GM12878 (cell line): ENCODE measurements at regions of chr3 and their contacts with region 1.

Region 1: DNA sequence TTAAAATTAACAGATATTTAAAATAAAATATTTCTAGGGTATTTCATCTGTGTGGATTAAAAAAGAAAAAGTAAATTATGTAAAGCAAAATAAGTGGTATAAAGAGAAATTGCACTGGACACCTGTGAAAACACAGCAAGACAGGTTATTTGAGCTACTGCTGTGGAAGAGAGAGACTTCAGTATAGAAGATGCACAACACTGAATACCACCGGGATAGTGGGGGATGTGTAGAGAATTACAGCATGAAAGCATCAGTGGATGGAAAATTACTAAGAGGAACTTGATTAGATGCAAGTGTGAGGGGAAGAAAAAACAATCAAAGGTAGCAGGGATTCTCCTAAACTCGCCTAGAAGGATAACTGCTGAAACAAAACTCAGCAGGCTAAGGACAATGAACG is 1242.5 kb upstream of the GBE1 start:
- DNase-seq: no peak
- ATAC-seq: no peak
- H3K4me3 ChIP-seq: no peak overlapping the region
- H3K27ac ChIP-seq: no peak overlapping the region
- H3K4me1 ChIP-seq: no peaks in the 10 kb centered on the region
- H3K27me3 ChIP-seq: no peaks in the 10 kb centered on the region
- CTCF ChIP-seq: no peak
- EP300 ChIP-seq: no peak
- POLR2A ChIP-seq: no peak
- RAD21 ChIP-seq: no peak

Region 2: DNA sequence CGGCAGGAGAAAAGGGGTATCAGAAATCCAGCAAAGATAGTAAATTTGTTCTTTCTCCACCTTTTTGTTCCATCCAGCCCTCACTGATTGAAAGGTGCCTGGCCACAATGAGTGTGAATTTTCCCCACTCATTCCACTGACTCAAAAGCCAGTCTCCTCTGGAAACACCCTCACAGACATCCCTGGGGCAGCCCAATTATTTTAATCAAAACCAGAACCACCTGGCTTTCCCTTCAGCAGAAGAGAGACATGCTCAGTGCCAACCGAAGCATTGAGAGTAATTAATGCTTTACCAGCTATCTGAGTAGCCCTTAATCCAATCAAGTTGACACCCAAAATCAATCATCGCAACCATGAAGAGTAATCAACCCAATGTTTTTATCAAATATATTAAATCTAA is 112.9 kb before region 1 on chr3:
- CTCF ChIA-PET with region 1: no interaction called
- POLR2A ChIA-PET with region 1: no interaction called
- RAD21 ChIA-PET with region 1: no interaction called
- SMC1A ChIA-PET with region 1: no interaction called
- in situ Hi-C with region 1: no loop called
- intact Hi-C with region 1: no loop called
- DNase-seq: no peak
- ATAC-seq: no peak
- H3K4me3 ChIP-seq: no peak overlapping the region
- H3K27ac ChIP-seq: no peak overlapping the region
- H3K4me1 ChIP-seq: no peaks in the 10 kb centered on the region
- H3K27me3 ChIP-seq: no peaks in the 10 kb centered on the region
- CTCF ChIP-seq: no peak
- EP300 ChIP-seq: no peak
- POLR2A ChIP-seq: no peak
- RAD21 ChIP-seq: no peak

Region 3: GRCh38 chr3:82940124-82940523 is 63.8 kb before region 1 on chr3:
- CTCF ChIA-PET with region 1: no interaction called
- POLR2A ChIA-PET with region 1: no interaction called
- RAD21 ChIA-PET with region 1: no interaction called
- SMC1A ChIA-PET with region 1: interaction called, 6 read pairs
- in situ Hi-C with region 1: no loop called
- intact Hi-C with region 1: loop called (anchors 5 kb)
- DNase-seq: no peak
- ATAC-seq: no peak
- H3K4me3 ChIP-seq: no peak overlapping the region
- H3K27ac ChIP-seq: no peak overlapping the region
- H3K4me1 ChIP-seq: no peaks in the 10 kb centered on the region
- H3K27me3 ChIP-seq: no peaks in the 10 kb centered on the region
- CTCF ChIP-seq: no peak
- EP300 ChIP-seq: no peak
- POLR2A ChIP-seq: no peak
- RAD21 ChIP-seq: no peak